Activated CD4-positive, alpha-beta T cell treated with anti-CD3 and anti-CD28 coated beads for 36 hours (primary cell): ENCODE measurements at regions of chr9 and their contacts with region 1.

Region 1: DNA sequence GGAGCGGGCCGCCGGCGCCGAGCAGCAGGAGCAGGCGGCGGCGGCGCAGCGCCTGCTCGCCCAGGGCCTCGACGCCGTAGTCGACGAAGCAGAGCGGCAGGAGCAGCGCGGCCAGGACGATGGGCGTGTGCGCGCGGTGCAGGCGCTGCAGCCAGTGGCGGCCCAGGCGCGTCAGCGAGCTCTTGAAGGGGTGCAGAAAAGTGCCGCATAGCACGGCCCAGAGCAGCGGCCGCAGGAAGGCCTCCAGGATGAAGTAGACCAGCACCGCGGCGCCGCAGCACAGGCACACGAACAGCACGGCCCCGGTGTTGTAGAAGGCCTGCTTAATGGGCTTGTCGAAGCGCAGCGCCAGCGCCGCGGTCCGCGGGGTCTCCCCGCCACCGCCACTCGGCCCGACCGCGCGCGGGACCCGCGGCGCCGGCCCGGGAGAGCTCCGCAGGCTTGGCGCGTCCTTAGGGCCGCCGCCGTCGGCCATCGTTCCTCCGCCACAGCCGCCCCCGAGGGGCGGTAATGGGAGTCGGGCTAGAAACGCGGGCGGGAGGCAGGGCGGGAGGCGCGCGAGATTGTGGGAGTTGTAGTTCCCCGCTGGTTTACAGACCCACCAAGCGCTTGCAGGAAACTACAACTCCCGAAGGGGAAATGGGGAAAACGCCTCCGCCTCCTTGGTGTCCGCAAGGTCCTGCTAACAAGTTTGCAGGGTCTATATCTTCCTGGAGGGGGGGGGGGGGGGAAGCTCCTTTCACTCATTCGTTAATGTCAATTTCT is at the start of gene TMEM245:
- DNase-seq: peak; percentile 97
- ATAC-seq: peak; percentile 91
- H3K4me3 Mint-ChIP-seq: peak within 1 kb of the TSS; percentile 94
- H3K27ac Mint-ChIP-seq: peak within 1 kb of the TSS; percentile 81
- H3K4me1 Mint-ChIP-seq: peaks cover 39% of the 10 kb centered on the region
- H3K27me3 Mint-ChIP-seq: no peaks in the 10 kb centered on the region
- total RNA-seq, gene TMEM245: 24.0 to 24.5 TPM

Region 2: GRCh38 chr9:107489687-107490605 is 1629.7 kb before region 1 on chr9 and contains the start of gene KLF4:
- CTCF ChIA-PET with region 1: no interaction called
- POLR2A ChIA-PET with region 1: no interaction called
- intact Hi-C with region 1: loop called in 1 of 2 experiments (anchors 10 kb)
- DNase-seq: peak; percentile 89
- ATAC-seq: peak; percentile 84
- H3K4me3 Mint-ChIP-seq: peak within 1 kb of the TSS; percentile 65
- H3K27ac Mint-ChIP-seq: no peak within 1 kb of the TSS
- H3K4me1 Mint-ChIP-seq: peaks cover 20% of the 10 kb centered on the region
- H3K27me3 Mint-ChIP-seq: peaks cover 58% of the 10 kb centered on the region
- total RNA-seq, gene KLF4: 0.88 to 1.2 TPM

Region 3: DNA sequence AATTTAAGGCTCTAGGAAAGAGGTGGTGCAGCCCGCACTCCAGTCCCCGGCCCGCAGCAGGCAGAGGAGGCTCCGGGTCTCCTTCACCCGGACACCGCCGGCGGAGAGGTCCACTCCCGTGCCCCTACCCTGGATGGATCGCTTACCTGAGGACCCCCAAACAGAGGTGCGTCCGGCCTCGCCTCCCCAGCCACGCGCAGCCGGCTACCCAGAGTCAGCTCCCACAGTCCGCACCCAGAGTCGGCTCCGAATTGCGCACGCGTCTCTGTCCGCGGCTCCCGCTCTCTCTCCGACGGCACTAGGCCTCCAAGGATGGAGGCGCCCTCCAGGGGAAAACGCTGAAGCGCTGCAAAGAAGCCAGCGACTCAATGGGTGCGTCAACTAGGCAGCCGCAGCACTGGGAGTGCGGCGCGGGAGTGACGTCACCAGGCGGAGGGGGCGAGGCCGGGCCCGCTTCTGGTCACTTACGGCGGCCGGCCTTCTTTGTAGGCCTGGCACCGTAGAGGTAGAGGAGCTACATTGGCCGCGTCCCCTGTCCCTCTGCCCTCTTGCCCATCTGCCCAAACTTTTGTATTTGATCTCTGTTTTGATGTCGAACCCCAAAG is 185.8 kb before region 1 on chr9 and contains the start of gene ELP1:
- CTCF ChIA-PET with region 1: no interaction called
- POLR2A ChIA-PET with region 1: no interaction called
- intact Hi-C with region 1: loop called (anchors 1 to 2 kb)
- DNase-seq: peak; percentile 96
- ATAC-seq: peak; percentile 88
- H3K4me3 Mint-ChIP-seq: peak within 1 kb of the TSS; percentile 98
- H3K27ac Mint-ChIP-seq: peak within 1 kb of the TSS; percentile 95
- H3K4me1 Mint-ChIP-seq: peaks cover 29% of the 10 kb centered on the region
- H3K27me3 Mint-ChIP-seq: no peaks in the 10 kb centered on the region
- total RNA-seq, gene ELP1: 31.1 to 58.0 TPM

Region 4: GRCh38 chr9:109098171-109098959 is 21.3 kb before region 1 on chr9:
- CTCF ChIA-PET with region 1: interaction called, 5 read pairs
- POLR2A ChIA-PET with region 1: interaction called, 5 read pairs
- intact Hi-C with region 1: loop called (anchors 1 kb)
- DNase-seq: no peak
- ATAC-seq: no peak
- H3K4me3 Mint-ChIP-seq: no peak overlapping the region
- H3K27ac Mint-ChIP-seq: peak overlapping the region; percentile 89
- H3K4me1 Mint-ChIP-seq: peaks cover 92% of the 10 kb centered on the region
- H3K27me3 Mint-ChIP-seq: no peaks in the 10 kb centered on the region

Region 5: GRCh38 chr9:109192732-109193361 is 73.2 kb after region 1 on chr9:
- CTCF ChIA-PET with region 1: no interaction called
- POLR2A ChIA-PET with region 1: no interaction called
- intact Hi-C with region 1: no loop called
- DNase-seq: peak; percentile 16
- ATAC-seq: no peak
- H3K4me3 Mint-ChIP-seq: no peak overlapping the region
- H3K27ac Mint-ChIP-seq: no peak overlapping the region
- H3K4me1 Mint-ChIP-seq: no peaks in the 10 kb centered on the region
- H3K27me3 Mint-ChIP-seq: peaks cover 4% of the 10 kb centered on the region

Region 6: DNA sequence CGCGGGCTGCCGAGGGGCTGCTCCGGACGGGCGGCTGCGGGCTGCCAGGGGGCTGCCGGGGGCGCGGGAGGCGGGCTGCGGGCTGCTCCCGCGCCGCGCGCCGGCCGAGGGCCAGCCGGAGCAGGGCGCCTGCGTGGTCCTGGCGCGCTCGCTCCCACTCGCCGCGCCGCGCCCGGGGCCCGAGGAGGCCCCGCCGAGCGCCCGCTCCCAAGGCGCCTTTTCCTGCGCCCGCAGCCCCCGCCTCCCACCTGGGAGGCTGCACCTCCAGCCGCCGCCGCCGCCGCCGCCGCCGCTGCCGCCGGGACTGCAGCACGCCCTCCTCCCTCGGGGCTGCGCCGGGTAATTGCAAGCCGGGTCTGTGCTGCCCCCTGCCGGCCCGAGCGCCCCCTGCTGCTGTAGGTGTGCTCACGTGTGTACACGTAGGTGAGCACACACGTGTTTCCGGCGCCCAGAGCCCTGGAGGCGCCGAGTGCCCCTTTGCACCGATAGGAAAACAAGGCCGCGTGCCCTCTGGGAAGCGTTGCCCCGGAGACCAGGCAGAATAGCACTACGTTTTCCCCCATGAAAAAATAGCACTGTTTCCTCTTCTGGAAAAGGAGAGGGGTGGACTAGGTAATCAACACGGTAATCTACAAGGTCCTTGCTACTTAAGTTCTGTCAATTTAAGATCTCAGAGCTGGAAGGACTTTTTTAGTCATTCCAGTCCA is 201.3 kb after region 1 on chr9 and contains the start of gene EPB41L4B:
- CTCF ChIA-PET with region 1: no interaction called
- POLR2A ChIA-PET with region 1: no interaction called
- intact Hi-C with region 1: loop called in 1 of 2 experiments (anchors 1 kb)
- DNase-seq: peak; percentile 96
- ATAC-seq: peak; percentile 99
- H3K4me3 Mint-ChIP-seq: peak within 1 kb of the TSS; percentile 61
- H3K27ac Mint-ChIP-seq: no peak within 1 kb of the TSS
- H3K4me1 Mint-ChIP-seq: peaks cover 13% of the 10 kb centered on the region
- H3K27me3 Mint-ChIP-seq: peaks cover 45% of the 10 kb centered on the region
- total RNA-seq, gene EPB41L4B: 0.23 to 0.33 TPM

Region 7: GRCh38 chr9:110256380-110257096 is 1136.9 kb after region 1 on chr9 and contains the start of gene TXN:
- CTCF ChIA-PET with region 1: no interaction called
- POLR2A ChIA-PET with region 1: no interaction called
- intact Hi-C with region 1: loop called in 1 of 2 experiments (anchors 5 kb)
- DNase-seq: peak; percentile 94
- ATAC-seq: peak; percentile 77
- H3K4me3 Mint-ChIP-seq: peak within 1 kb of the TSS; percentile 95
- H3K27ac Mint-ChIP-seq: peak within 1 kb of the TSS; percentile 99
- H3K4me1 Mint-ChIP-seq: peaks cover 60% of the 10 kb centered on the region
- H3K27me3 Mint-ChIP-seq: no peaks in the 10 kb centered on the region
- total RNA-seq, gene TXN: 449 to 553 TPM